HEK293 (cell line): ENCODE measurements at regions of chr6 and their contacts with region 1.

Region 1: DNA sequence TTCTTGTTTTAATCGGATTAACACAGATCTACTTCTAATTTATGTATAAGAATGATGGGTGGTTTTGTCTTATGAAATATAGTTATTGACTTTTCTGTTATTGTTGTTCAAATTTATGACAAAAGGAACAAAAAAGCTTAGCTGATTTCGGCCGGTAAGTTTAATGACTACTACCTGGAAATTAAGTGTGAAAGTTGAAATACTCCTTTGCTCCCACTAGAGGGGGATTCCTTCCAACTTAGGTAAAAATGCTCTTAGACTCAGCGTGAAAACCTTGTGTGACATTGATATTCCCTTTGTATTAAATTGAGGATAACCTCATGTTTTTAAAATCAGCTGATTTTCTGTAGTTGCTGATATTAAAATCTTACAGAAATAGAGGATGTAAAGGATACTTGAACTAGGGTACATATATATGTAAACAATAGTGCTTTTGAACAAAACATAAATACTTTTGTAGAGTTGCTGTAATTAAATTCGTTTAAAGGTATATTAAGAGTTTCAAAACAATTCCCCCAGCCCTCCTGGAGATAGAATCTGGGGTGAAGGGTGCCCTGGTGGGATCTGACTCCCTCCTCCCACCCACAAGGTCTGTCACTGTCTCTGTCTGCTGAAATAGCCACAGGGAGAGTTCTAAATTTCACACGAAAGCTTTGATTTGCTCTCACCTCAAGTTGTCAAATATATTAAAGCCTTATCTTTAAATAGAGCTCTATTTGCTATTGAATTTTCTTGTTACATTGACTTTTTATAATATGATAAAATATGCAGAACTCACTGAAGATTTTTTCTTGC is 257.5 kb downstream of the ARID1B start:
- H3K4me3 ChIP-seq: no peak overlapping the region
- H3K27ac ChIP-seq: no peak overlapping the region
- H3K4me1 ChIP-seq: no peaks in the 10 kb centered on the region
- CTCF ChIP-seq: peak; percentile 17; the same call in 1 of the 2 replicates

Region 2: GRCh38 chr6:156942266-156942665 is 92.4 kb before region 1 on chr6:
- CTCF ChIA-PET with region 1: interaction called, 10 read pairs
- POLR2A ChIA-PET with region 1: no interaction called
- H3K4me3 ChIP-seq: no peak overlapping the region
- H3K27ac ChIP-seq: no peak overlapping the region
- H3K4me1 ChIP-seq: peaks cover 22% of the 10 kb centered on the region
- CTCF ChIP-seq: no peak

Region 3: GRCh38 chr6:157045831-157046454 is 11.3 kb after region 1 on chr6:
- CTCF ChIA-PET with region 1: interaction called, 66 read pairs
- POLR2A ChIA-PET with region 1: no interaction called
- H3K4me3 ChIP-seq: no peak overlapping the region
- H3K27ac ChIP-seq: no peak overlapping the region
- H3K4me1 ChIP-seq: 0 out of 2 replicates have a peak, but pooled peaks cover 3% of the 10 kb centered on the region
- CTCF ChIP-seq: no peak

Region 4: DNA sequence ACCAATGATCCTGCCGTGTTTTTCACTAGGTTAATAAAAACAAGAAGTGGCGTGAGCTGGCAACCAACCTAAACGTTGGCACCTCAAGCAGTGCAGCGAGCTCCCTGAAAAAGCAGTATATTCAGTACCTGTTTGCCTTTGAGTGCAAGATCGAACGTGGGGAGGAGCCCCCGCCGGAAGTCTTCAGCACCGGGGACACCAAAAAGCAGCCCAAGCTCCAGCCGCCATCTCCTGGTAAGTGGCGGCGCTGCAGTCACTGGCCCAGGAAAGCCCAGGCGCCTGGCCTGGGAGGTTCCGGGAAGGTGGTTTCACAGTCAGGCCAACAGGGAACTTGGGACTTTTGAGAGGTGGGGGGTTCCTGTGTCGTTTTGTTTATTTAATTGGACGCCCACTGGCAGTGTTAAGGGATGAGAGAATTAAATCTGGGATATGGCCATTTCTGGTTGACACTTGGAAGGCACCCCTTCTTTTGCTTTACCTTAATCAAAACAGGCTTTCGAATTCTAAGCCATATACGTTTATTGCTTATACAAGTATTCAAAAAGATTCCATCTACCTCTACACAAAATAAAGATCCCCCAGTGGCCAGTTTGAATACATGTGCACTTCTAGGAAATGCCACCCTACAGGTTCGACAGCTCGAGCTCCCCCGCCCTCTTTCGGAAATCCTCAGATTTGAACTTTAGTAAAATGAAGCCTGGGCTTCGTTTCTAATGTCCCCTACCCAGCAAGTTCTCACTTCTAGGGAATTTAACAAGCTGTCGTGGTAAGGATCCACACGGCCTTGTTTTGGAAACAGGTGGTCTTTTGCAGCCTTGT is 149.8 kb after region 1 on chr6:
- CTCF ChIA-PET with region 1: interaction called, 20 read pairs
- POLR2A ChIA-PET with region 1: no interaction called
- H3K4me3 ChIP-seq: no peak overlapping the region
- H3K27ac ChIP-seq: no peak overlapping the region
- H3K4me1 ChIP-seq: peaks cover 13% of the 10 kb centered on the region
- CTCF ChIP-seq: peak; percentile 61